Activated B cell treated with CpG ODN at 0.5 μM for 24 hours (primary cell): ENCODE measurements at regions of chr7 and their contacts with region 1.

Region 1: GRCh38 chr7:130205084-130205947 is at the start of gene TMEM209:
- DNase-seq: peak; percentile 83
- ATAC-seq: peak; percentile 98
- H3K4me3 Mint-ChIP-seq: peak within 1 kb of the TSS; percentile 100
- H3K27ac Mint-ChIP-seq: peak within 1 kb of the TSS; percentile 100
- H3K4me1 Mint-ChIP-seq: peaks cover 20% of the 10 kb centered on the region
- H3K27me3 Mint-ChIP-seq: peaks cover 3% of the 10 kb centered on the region
- CTCF ChIP-seq: no peak
- total RNA-seq, gene TMEM209: 30.0 and 32.6 TPM in 2 replicates

Region 2: GRCh38 chr7:129780257-129780973 is 424.9 kb before region 1 on chr7:
- CTCF ChIA-PET with region 1: no interaction called
- POLR2A ChIA-PET with region 1: no interaction called
- intact Hi-C with region 1: loop called (anchors 1 kb)
- DNase-seq: peak; percentile 62
- ATAC-seq: peak; percentile 79
- H3K4me3 Mint-ChIP-seq: peak overlapping the region; percentile 71
- H3K27ac Mint-ChIP-seq: no peak overlapping the region
- H3K4me1 Mint-ChIP-seq: peaks cover 38% of the 10 kb centered on the region
- H3K27me3 Mint-ChIP-seq: peaks cover 41% of the 10 kb centered on the region
- CTCF ChIP-seq: no peak

Region 3: GRCh38 chr7:130010689-130011412 is 194.5 kb before region 1 on chr7:
- CTCF ChIA-PET with region 1: no interaction called
- POLR2A ChIA-PET with region 1: interaction called, 10 read pairs
- intact Hi-C with region 1: no loop called
- DNase-seq: peak; percentile 74
- ATAC-seq: peak; percentile 91
- H3K4me3 Mint-ChIP-seq: no peak overlapping the region
- H3K27ac Mint-ChIP-seq: no peak overlapping the region
- H3K4me1 Mint-ChIP-seq: peaks cover 9% of the 10 kb centered on the region
- H3K27me3 Mint-ChIP-seq: no peaks in the 10 kb centered on the region
- CTCF ChIP-seq: peak; percentile 51

Region 4: DNA sequence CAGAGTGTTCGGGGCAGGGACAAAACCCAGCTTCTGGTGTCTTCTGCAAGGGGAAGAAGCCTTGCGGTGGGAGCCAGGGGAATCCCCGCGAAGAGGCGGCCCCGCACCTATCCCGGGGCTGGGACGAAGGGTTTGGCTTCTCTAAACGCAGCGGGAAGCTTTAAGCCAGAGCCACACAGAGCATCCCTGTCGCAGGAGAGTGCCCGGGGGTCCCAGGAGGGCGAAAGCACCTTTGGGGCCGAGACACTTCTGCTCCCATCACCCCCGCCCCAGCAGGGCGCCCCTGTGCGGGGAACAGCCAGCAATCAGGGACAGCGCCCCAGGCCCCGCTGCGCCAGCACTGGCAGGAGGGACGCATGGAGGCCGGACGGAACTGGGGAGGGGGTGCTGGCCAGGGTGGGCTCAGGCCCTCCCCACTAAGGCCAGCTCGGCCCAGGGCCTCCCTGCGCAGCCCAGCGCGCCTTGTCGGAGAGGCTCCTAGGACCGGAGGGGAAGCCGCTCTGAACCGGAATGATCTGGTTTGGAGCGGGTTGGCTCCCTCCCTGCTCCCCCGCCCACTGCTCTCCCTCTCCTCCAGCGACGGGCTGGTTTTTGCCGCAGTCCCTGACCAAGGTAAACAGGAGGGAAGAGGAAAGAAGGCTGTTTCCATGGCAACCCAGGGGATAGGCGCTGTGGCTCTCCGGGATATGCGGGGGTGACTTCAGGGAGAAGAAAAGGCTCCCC is 64.0 kb before region 1 on chr7:
- CTCF ChIA-PET with region 1: no interaction called
- POLR2A ChIA-PET with region 1: interaction called, 43 read pairs
- intact Hi-C with region 1: loop called (anchors 1 kb)
- DNase-seq: peak; percentile 51
- ATAC-seq: peak; percentile 83
- H3K4me3 Mint-ChIP-seq: peak overlapping the region; percentile 87
- H3K27ac Mint-ChIP-seq: peak overlapping the region; percentile 94
- H3K4me1 Mint-ChIP-seq: peaks cover 44% of the 10 kb centered on the region
- H3K27me3 Mint-ChIP-seq: no peaks in the 10 kb centered on the region
- CTCF ChIP-seq: no peak

Region 5: GRCh38 chr7:130191791-130192190 is 13.5 kb before region 1 on chr7:
- CTCF ChIA-PET with region 1: no interaction called
- POLR2A ChIA-PET with region 1: interaction called, 17 read pairs
- intact Hi-C with region 1: no loop called
- DNase-seq: no peak
- ATAC-seq: no peak
- H3K4me3 Mint-ChIP-seq: no peak overlapping the region
- H3K27ac Mint-ChIP-seq: no peak overlapping the region
- H3K4me1 Mint-ChIP-seq: peaks cover 7% of the 10 kb centered on the region
- H3K27me3 Mint-ChIP-seq: no peaks in the 10 kb centered on the region
- CTCF ChIP-seq: no peak

Region 6: DNA sequence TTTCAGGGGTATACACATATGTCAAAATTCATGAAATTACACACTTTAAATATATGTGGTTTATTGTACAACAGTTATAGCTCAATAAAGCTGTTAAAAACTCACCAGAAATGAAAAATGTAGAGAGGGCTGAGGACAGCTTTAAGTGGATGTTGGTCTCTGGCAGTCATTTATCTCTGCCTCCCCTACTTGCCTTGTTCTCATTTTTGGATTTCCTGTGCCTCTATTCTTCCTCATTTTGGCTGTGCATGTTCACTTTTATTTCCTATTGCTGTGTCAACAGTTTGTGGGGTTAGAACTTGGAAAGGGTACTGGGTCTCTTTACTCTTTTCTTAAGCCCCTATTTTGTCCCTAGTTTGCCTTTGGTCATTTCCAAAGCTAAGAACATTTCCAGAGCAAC is 268.0 kb after region 1 on chr7:
- CTCF ChIA-PET with region 1: no interaction called
- POLR2A ChIA-PET with region 1: no interaction called
- intact Hi-C with region 1: no loop called
- DNase-seq: no peak
- ATAC-seq: no peak
- H3K4me3 Mint-ChIP-seq: no peak overlapping the region
- H3K27ac Mint-ChIP-seq: no peak overlapping the region
- H3K4me1 Mint-ChIP-seq: peaks cover 12% of the 10 kb centered on the region
- H3K27me3 Mint-ChIP-seq: peaks cover 7% of the 10 kb centered on the region
- CTCF ChIP-seq: no peak

Region 7: GRCh38 chr7:130543487-130544010 is 338.2 kb after region 1 on chr7:
- CTCF ChIA-PET with region 1: no interaction called
- POLR2A ChIA-PET with region 1: no interaction called
- intact Hi-C with region 1: no loop called
- DNase-seq: no peak
- ATAC-seq: no peak
- H3K4me3 Mint-ChIP-seq: no peak overlapping the region
- H3K27ac Mint-ChIP-seq: no peak overlapping the region
- H3K4me1 Mint-ChIP-seq: no peaks in the 10 kb centered on the region
- H3K27me3 Mint-ChIP-seq: no peaks in the 10 kb centered on the region
- CTCF ChIP-seq: no peak

Region 8: DNA sequence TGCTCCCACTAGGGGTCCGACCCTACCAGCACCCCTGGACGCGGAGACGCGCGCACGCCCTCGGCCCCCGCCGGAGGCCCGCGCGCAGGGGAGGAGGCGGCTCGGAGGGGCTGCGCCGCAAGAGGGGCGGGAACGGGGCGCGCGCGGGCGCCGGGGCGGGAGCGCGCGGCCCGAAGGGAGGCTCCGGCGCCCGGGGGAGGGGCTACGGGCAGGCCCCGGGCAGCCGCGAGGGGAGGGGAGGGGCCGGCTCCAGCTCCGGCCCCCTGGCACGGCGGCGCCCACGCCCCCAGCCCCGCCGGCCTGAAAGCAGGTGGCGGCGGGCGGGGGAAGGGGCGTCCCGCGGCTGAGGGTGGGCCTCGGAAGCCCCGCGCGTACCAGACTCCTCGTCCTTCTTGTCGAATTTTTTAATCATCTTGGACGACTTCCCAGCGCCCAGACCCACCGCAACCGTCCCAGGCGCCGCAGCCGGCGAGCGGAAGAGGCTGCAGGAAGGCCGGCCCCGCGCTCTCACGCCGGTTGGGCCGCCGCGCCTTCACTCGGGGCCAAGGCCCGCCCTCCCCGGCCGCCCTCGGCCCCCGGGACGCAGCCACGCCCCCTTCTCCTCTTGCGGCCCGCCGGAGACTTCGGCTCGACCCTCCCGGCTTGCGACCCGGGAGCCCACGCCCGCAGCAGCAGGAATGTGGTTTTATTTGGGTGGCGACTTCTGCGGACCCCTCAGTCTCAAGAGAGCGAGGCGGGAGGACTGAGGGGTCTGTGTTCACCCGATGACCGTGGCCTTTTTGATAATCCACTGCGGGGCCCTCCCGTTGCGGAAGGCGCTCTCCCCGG is 463.2 kb after region 1 on chr7 and contains the start of gene COPG2:
- CTCF ChIA-PET with region 1: no interaction called
- POLR2A ChIA-PET with region 1: interaction called, 5 read pairs
- intact Hi-C with region 1: loop called (anchors 1 kb)
- DNase-seq: peak; percentile 87
- ATAC-seq: peak; percentile 93
- H3K4me3 Mint-ChIP-seq: peak within 1 kb of the TSS; percentile 89
- H3K27ac Mint-ChIP-seq: peak within 1 kb of the TSS; percentile 75
- H3K4me1 Mint-ChIP-seq: peaks cover 11% of the 10 kb centered on the region
- H3K27me3 Mint-ChIP-seq: peaks cover 3% of the 10 kb centered on the region
- CTCF ChIP-seq: no peak
- total RNA-seq, gene COPG2: 15.3 and 15.4 TPM in 2 replicates